CD8-positive, alpha-beta T cell (primary cell): ENCODE measurements at regions of chr2 and their contacts with region 1.

Region 1: GRCh38 chr2:85327822-85328617 is at the start of gene TGOLN2:
- DNase-seq: peak; percentile 88 to 97 (median 94)
- ATAC-seq: peak; percentile 85
- H3K4me3 ChIP-seq: peak within 1 kb of the TSS; percentile 84 to 96
- H3K4me3 Mint-ChIP-seq: peak within 1 kb of the TSS; percentile 95
- H3K27ac ChIP-seq: peak within 1 kb of the TSS; percentile 97
- H3K27ac Mint-ChIP-seq: peak within 1 kb of the TSS; percentile 99
- H3K4me1 ChIP-seq: peaks cover 37% of the 10 kb centered on the region
- H3K4me1 Mint-ChIP-seq: peaks cover 45% of the 10 kb centered on the region
- H3K27me3 ChIP-seq: no peaks in the 10 kb centered on the region
- H3K27me3 Mint-ChIP-seq: no peaks in the 10 kb centered on the region
- CTCF ChIP-seq: no peak
- total RNA-seq, gene TGOLN2: 127 to 128 TPM

Region 2: GRCh38 chr2:84459018-84459943 is 868.7 kb before region 1 on chr2 and contains the start of gene SUCLG1:
- CTCF ChIA-PET with region 1: no interaction called
- POLR2A ChIA-PET with region 1: no interaction called
- intact Hi-C with region 1: loop called in 1 of 2 experiments (anchors 1 kb)
- DNase-seq: peak; percentile 72 to 94 (median 87)
- ATAC-seq: peak; percentile 96
- H3K4me3 ChIP-seq: peak within 1 kb of the TSS; percentile 81 to 95
- H3K4me3 Mint-ChIP-seq: peak within 1 kb of the TSS; percentile 98
- H3K27ac ChIP-seq: peak within 1 kb of the TSS; percentile 78 to 97
- H3K27ac Mint-ChIP-seq: peak within 1 kb of the TSS; percentile 98
- H3K4me1 ChIP-seq: peaks cover 30% of the 10 kb centered on the region
- H3K4me1 Mint-ChIP-seq: peaks cover 46% of the 10 kb centered on the region
- H3K27me3 ChIP-seq: no peaks in the 10 kb centered on the region
- H3K27me3 Mint-ChIP-seq: no peaks in the 10 kb centered on the region
- CTCF ChIP-seq: no peak
- total RNA-seq, gene SUCLG1: 31.6 to 35.1 TPM

Region 3: DNA sequence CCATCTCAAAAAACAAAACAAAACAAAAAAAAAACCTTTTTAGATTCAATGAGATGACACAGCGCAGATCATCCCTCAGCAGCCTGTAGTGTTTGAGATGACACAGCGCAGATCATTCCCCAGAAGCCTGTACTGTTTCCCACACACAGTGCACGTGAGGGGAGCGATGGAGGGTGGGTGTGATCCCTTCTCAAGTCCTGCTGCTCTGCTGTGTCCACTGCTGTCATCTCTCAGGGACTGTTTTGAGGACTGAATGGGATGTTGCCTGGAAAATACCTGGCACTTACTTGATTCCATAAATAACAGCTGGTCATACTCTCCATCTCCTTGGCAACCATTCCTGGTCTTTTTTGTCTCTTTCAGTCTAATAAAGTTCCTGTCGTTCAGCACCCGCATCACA is 25.9 kb before region 1 on chr2:
- CTCF ChIA-PET with region 1: interaction called, 136 read pairs
- POLR2A ChIA-PET with region 1: interaction called, 54 read pairs
- intact Hi-C with region 1: no loop called
- DNase-seq: no peak
- ATAC-seq: no peak
- H3K4me3 ChIP-seq: no peak overlapping the region
- H3K4me3 Mint-ChIP-seq: no peak overlapping the region
- H3K27ac ChIP-seq: no peak overlapping the region
- H3K27ac Mint-ChIP-seq: no peak overlapping the region
- H3K4me1 ChIP-seq: no peaks in the 10 kb centered on the region
- H3K4me1 Mint-ChIP-seq: peaks cover 15% of the 10 kb centered on the region
- H3K27me3 ChIP-seq: no peaks in the 10 kb centered on the region
- H3K27me3 Mint-ChIP-seq: peaks cover 5% of the 10 kb centered on the region
- CTCF ChIP-seq: no peak

Region 4: GRCh38 chr2:85340034-85340892 is 12.2 kb after region 1 on chr2:
- CTCF ChIA-PET with region 1: interaction called, 3 read pairs
- POLR2A ChIA-PET with region 1: interaction called, 11 read pairs
- intact Hi-C with region 1: no loop called
- DNase-seq: no peak
- ATAC-seq: no peak
- H3K4me3 ChIP-seq: no peak overlapping the region
- H3K4me3 Mint-ChIP-seq: no peak overlapping the region
- H3K27ac ChIP-seq: no peak overlapping the region
- H3K27ac Mint-ChIP-seq: no peak overlapping the region
- H3K4me1 ChIP-seq: no peaks in the 10 kb centered on the region
- H3K4me1 Mint-ChIP-seq: no peaks in the 10 kb centered on the region
- H3K27me3 ChIP-seq: no peaks in the 10 kb centered on the region
- H3K27me3 Mint-ChIP-seq: no peaks in the 10 kb centered on the region
- CTCF ChIP-seq: no peak

Region 5: GRCh38 chr2:85551698-85552678 is 224.0 kb after region 1 on chr2:
- CTCF ChIA-PET with region 1: interaction called, 3 read pairs
- POLR2A ChIA-PET with region 1: interaction called, 3 read pairs
- intact Hi-C with region 1: loop called in 1 of 2 experiments (anchors 2 kb)
- DNase-seq: peak; percentile 83 to 94 (median 88)
- ATAC-seq: peak; percentile 100
- H3K4me3 ChIP-seq: no peak overlapping the region
- H3K4me3 Mint-ChIP-seq: no peak overlapping the region
- H3K27ac ChIP-seq: no peak overlapping the region
- H3K27ac Mint-ChIP-seq: no peak overlapping the region
- H3K4me1 ChIP-seq: no peaks in the 10 kb centered on the region
- H3K4me1 Mint-ChIP-seq: peaks cover 4% of the 10 kb centered on the region
- H3K27me3 ChIP-seq: no peaks in the 10 kb centered on the region
- H3K27me3 Mint-ChIP-seq: no peaks in the 10 kb centered on the region
- CTCF ChIP-seq: peak; percentile 87

Region 6: GRCh38 chr2:85602476-85603234 is 274.6 kb after region 1 on chr2 and contains the start of gene TMEM150A:
- CTCF ChIA-PET with region 1: no interaction called
- POLR2A ChIA-PET with region 1: interaction called, 4 read pairs
- intact Hi-C with region 1: loop called in 1 of 2 experiments (anchors 5 kb)
- DNase-seq: peak; percentile 71 to 93 (median 87)
- ATAC-seq: peak; percentile 91
- H3K4me3 ChIP-seq: peak within 1 kb of the TSS; percentile 92 to 97
- H3K4me3 Mint-ChIP-seq: peak within 1 kb of the TSS; percentile 91
- H3K27ac ChIP-seq: peak within 1 kb of the TSS; percentile 58 to 67
- H3K27ac Mint-ChIP-seq: peak within 1 kb of the TSS; percentile 89
- H3K4me1 ChIP-seq: peaks cover 27% of the 10 kb centered on the region
- H3K4me1 Mint-ChIP-seq: peaks cover 37% of the 10 kb centered on the region
- H3K27me3 ChIP-seq: no peaks in the 10 kb centered on the region
- H3K27me3 Mint-ChIP-seq: no peaks in the 10 kb centered on the region
- CTCF ChIP-seq: no peak
- total RNA-seq, gene TMEM150A: 5.7 to 6.0 TPM